ENCODE measurements at regions of chr3 and their contacts with region 1.

Region 1: GRCh38 chr3:123328851-123329635 is 119.8 kb downstream of the ADCY5 start:
- DNase-seq: peak; percentile 89
- H3K4me3 ChIP-seq: peak overlapping the region in 1 of 2 experiments; percentile 12; a peak in 1 of 4 replicates
- H3K27ac ChIP-seq: no peak overlapping the region
- H3K4me1 ChIP-seq: peaks cover 0 to 8% of the 10 kb centered on the region in 2 experiments; a peak in 1 of 4 replicates
- H3K27me3 ChIP-seq: peaks cover 21% of the 10 kb centered on the region
- CTCF ChIP-seq: peak; percentile 91
- EP300 ChIP-seq: no peak
- RAD21 ChIP-seq: peak; percentile 87

Region 2: GRCh38 chr3:123028233-123028828 is 300.7 kb before region 1 on chr3:
- CTCF ChIA-PET with region 1: no interaction called
- POLR2A ChIA-PET with region 1: no interaction called
- DNase-seq: peak; percentile 79
- H3K4me3 ChIP-seq: peak overlapping the region; percentile 50 to 63
- H3K27ac ChIP-seq: no peak overlapping the region
- H3K4me1 ChIP-seq: peaks cover 0 to 23% of the 10 kb centered on the region in 2 experiments; a peak in 2 of 4 replicates
- H3K27me3 ChIP-seq: peaks cover 45% of the 10 kb centered on the region
- CTCF ChIP-seq: peak; percentile 76
- EP300 ChIP-seq: no peak
- RAD21 ChIP-seq: peak; percentile 92

Region 3: GRCh38 chr3:123297627-123297899 is 31.5 kb before region 1 on chr3:
- CTCF ChIA-PET with region 1: no interaction called
- POLR2A ChIA-PET with region 1: no interaction called
- DNase-seq: no peak
- H3K4me3 ChIP-seq: no peak overlapping the region
- H3K27ac ChIP-seq: no peak overlapping the region
- H3K4me1 ChIP-seq: no peaks in the 10 kb centered on the region
- H3K27me3 ChIP-seq: no peaks in the 10 kb centered on the region; the same call in 1 of the 2 replicates
- CTCF ChIP-seq: no peak
- EP300 ChIP-seq: no peak
- RAD21 ChIP-seq: peak; percentile 23; the same call in 1 of the 2 replicates

Region 4: GRCh38 chr3:123344175-123344906 is 15.3 kb after region 1 on chr3:
- CTCF ChIA-PET with region 1: interaction called, 18 read pairs
- POLR2A ChIA-PET with region 1: no interaction called
- DNase-seq: no peak
- H3K4me3 ChIP-seq: no peak overlapping the region
- H3K27ac ChIP-seq: no peak overlapping the region
- H3K4me1 ChIP-seq: peaks cover 0 to 2% of the 10 kb centered on the region in 2 experiments; a peak in 1 of 4 replicates
- H3K27me3 ChIP-seq: peaks cover 56% of the 10 kb centered on the region
- CTCF ChIP-seq: no peak
- EP300 ChIP-seq: no peak
- RAD21 ChIP-seq: no peak

Region 5: DNA sequence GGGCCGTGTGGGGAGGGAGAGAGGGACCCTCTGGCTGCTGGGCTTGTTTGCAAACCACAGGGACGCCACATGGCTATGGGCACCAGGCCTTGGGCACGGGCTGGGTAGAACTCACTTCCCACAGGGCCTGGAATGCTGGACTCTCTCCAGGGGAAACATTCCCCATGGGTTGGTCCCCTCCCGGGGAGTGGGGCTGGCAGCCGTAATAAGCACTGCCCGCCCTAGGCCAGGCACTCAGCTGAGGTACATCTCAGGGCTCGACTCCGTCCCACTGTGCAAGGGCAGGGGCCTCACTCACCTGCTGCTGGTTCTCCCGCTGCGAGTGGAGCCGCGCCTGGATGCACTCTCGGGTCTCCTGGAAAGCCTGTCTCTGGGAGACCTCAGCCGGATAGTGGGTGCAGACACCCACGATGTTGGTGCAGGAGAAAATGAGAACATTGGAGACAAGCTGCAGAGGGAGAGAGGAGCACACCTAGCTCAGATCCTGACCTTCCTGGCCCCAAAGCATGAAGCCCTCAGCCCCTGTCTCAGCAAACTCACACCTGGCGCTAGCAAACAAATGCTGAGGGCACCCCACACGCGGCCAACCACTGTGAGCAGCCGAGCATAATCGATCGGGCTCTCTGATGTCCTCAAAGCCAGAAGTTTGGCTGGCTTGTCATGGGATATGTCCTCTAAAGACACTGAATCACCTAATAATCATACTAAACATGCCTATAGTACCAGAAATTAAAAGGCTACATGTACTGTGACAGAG is 23.3 kb after region 1 on chr3:
- CTCF ChIA-PET with region 1: interaction called, 10 read pairs
- POLR2A ChIA-PET with region 1: no interaction called
- DNase-seq: no peak
- H3K4me3 ChIP-seq: no peak overlapping the region
- H3K27ac ChIP-seq: no peak overlapping the region
- H3K4me1 ChIP-seq: no peaks in the 10 kb centered on the region; a peak in 1 of 4 replicates
- H3K27me3 ChIP-seq: peaks cover 35% of the 10 kb centered on the region
- CTCF ChIP-seq: no peak
- EP300 ChIP-seq: no peak
- RAD21 ChIP-seq: no peak

Region 6: DNA sequence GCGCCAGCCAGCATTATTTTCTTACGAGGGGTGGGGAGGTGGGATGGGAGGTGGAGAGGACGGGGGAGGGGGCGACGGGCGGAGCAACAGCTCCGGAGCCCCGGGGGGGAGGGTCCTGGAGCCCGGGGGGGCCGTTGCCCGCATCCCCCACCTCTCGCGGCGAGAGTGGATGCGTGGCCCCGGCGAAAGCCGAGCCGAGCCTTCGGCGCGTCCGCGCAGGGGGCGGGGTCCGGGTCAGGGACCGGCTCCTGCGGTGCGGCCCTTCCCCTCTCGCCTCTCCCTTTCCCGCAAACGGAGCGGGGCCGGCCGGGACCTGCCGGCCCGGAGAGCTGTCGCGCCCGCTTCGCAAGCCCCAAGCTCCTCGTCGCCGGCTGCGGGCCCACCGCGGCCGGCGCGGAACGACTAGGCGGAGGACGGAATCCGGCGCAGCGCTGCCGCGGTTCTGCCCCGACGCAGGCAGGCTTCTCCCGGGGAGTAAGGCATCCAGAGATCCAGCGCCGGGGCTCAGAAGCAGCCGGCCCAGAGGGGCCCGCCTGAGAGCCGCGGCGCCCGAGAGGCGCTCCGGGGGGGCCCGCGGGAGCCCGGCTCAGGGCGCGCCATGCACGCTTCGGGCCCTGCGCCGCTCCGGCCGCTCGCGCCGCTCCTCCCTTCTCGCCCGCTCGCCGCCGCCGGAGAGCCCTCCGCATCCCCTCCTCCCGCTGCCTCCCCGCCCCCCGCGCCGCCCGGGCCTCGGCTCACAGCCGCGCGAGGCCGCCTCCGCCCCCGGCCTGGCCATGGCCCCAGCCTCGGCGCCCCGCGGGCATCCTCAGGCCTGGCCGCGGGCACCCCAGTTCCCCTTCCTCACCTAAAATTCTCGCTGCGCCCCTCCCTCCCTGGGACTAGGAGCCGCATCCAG is 120.3 kb after region 1 on chr3:
- CTCF ChIA-PET with region 1: interaction called, 13 read pairs
- POLR2A ChIA-PET with region 1: no interaction called
- DNase-seq: peak; percentile 91
- H3K4me3 ChIP-seq: peak overlapping the region; percentile 62 to 64
- H3K27ac ChIP-seq: no peak overlapping the region; a peak in 1 of 4 replicates
- H3K4me1 ChIP-seq: peaks cover 0 to 5% of the 10 kb centered on the region in 2 experiments; a peak in 1 of 4 replicates
- H3K27me3 ChIP-seq: peaks cover 52% of the 10 kb centered on the region
- CTCF ChIP-seq: no peak
- EP300 ChIP-seq: no peak
- RAD21 ChIP-seq: no peak

Region 7: DNA sequence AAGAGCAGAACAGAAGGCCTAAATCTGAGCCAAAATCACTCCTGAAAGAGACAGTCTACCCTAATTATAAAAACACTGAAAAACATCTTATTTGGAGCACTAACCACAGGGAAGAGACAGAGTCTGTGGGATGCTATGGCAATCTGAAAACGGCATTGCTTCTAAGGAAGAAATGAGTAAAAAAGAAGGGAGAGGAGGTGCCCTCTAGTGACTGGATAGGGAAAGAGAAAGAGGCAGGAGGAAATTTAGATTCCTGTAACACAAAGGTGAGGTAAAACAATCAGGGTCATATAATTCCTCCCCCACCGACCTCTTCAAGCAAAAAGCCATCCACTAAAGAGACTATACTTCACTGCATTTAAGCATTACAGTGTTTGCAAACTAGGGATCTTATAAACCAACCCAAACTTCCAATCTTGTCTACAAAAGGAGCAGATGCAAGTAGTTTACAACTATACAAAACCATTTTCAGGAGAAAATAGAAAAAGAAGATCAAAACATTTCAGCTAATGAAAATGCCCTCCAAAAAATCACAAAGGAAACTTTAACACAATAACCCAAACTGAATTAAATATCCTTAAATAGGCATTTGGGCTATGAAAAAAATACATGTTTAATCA is 223.2 kb after region 1 on chr3:
- CTCF ChIA-PET with region 1: interaction called, 10 read pairs
- POLR2A ChIA-PET with region 1: no interaction called
- DNase-seq: peak; percentile 27
- H3K4me3 ChIP-seq: no peak overlapping the region; a peak in 1 of 4 replicates
- H3K27ac ChIP-seq: no peak overlapping the region
- H3K4me1 ChIP-seq: no peaks in the 10 kb centered on the region; a peak in 1 of 4 replicates
- H3K27me3 ChIP-seq: no peaks in the 10 kb centered on the region
- CTCF ChIP-seq: peak; percentile 55
- EP300 ChIP-seq: no peak
- RAD21 ChIP-seq: peak; percentile 53

Region 8: GRCh38 chr3:123559040-123559861 is 230.2 kb after region 1 on chr3:
- CTCF ChIA-PET with region 1: interaction called, 39 read pairs
- POLR2A ChIA-PET with region 1: no interaction called
- DNase-seq: peak; percentile 54
- H3K4me3 ChIP-seq: peak overlapping the region in 1 of 2 experiments; percentile 24; a peak in 1 of 4 replicates
- H3K27ac ChIP-seq: no peak overlapping the region
- H3K4me1 ChIP-seq: no peaks in the 10 kb centered on the region; a peak in 1 of 4 replicates
- H3K27me3 ChIP-seq: no peaks in the 10 kb centered on the region
- CTCF ChIP-seq: peak; percentile 90
- EP300 ChIP-seq: no peak
- RAD21 ChIP-seq: peak; percentile 81

Region 9: DNA sequence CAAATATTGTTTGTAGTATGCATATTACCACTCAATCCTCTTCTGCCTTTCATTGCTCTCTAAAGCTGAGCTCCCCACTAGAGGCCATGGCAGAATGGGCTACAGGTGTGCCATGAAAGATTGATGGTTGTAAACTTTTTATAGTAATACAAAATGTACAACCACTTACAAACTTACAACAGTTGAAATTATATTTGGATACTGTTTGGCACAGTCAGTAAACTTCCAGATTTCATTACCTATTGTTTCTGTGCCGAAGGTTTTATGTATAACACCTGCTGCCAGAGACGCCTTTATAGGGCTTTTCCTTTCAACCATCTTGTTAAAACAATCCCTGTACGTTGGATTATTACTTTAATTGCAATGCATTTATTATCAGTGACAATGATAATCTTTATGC is 655.9 kb after region 1 on chr3:
- CTCF ChIA-PET with region 1: no interaction called
- POLR2A ChIA-PET with region 1: no interaction called
- DNase-seq: no peak
- H3K4me3 ChIP-seq: no peak overlapping the region
- H3K27ac ChIP-seq: no peak overlapping the region
- H3K4me1 ChIP-seq: peaks cover 0 to 3% of the 10 kb centered on the region in 2 experiments; a peak in 1 of 4 replicates
- H3K27me3 ChIP-seq: no peaks in the 10 kb centered on the region
- CTCF ChIP-seq: no peak
- EP300 ChIP-seq: no peak
- RAD21 ChIP-seq: no peak